ENCODE measurements at regions of chr15 and their contacts with region 1.

Region 1: GRCh38 chr15:52528991-52529926 is 579 bp upstream of the MYO5A start:
- DNase-seq: peak; percentile 76
- H3K4me3 Mint-ChIP-seq: peak overlapping the region; percentile 77
- H3K27ac Mint-ChIP-seq: peak overlapping the region; percentile 75
- H3K4me1 Mint-ChIP-seq: peaks cover 29% of the 10 kb centered on the region
- H3K27me3 Mint-ChIP-seq: peaks cover 16% of the 10 kb centered on the region

Region 2: GRCh38 chr15:52256366-52256765 is 272.9 kb before region 1 on chr15:
- intact Hi-C with region 1: loop called (anchors 1 kb)
- DNase-seq: peak; percentile 62
- H3K4me3 Mint-ChIP-seq: peak overlapping the region; percentile 47
- H3K27ac Mint-ChIP-seq: peak overlapping the region; percentile 82
- H3K4me1 Mint-ChIP-seq: peaks cover 28% of the 10 kb centered on the region
- H3K27me3 Mint-ChIP-seq: no peaks in the 10 kb centered on the region

Region 3: DNA sequence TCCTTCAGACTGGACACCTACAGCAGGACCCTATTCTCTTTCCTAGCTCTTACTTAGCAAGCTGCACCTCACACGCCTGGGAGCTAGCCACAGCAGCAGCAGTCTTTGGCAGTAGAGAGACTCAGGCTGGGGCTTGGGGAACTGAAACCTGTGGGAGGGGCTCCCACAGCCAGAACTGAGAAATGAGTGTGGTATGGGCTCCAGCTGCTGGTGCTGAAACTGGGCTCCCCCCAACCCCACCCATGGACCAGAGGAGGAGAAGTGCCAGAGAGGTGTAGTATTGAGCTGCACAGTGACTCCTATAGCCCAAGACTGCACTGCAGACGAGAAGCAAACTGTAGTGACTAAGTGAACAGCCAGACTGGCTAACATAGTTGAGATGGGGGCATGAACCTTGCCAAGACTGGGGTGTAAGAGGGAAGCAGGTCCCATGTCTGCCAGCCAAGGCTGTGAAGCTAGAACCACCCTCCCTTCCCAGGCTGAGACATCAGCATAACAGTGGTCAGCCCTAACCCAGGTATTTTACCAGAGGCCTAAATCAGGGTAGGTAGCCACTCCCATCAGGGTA is 63.0 kb before region 1 on chr15:
- intact Hi-C with region 1: loop called (anchors 1 kb)
- DNase-seq: peak; percentile 44
- H3K4me3 Mint-ChIP-seq: no peak overlapping the region
- H3K27ac Mint-ChIP-seq: no peak overlapping the region
- H3K4me1 Mint-ChIP-seq: peaks cover 52% of the 10 kb centered on the region
- H3K27me3 Mint-ChIP-seq: no peaks in the 10 kb centered on the region

Region 4: DNA sequence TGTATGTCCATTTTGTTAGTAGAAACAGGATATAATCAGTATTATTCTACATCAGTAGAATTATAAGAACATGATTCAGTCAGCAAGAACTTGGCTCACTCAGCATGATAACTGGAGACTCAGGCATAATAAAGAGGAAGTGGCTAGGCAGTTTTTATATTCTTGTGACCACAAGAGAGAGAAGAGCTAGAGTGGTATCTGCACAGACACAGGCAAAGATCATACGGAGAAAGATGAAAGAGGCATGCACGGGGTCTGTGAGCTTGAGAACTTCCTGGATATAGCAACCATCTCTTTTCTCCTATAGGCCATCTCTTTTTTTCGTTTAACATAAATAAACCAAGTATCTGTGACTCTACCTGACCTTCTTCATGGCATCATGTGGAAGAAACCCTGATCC is 47.3 kb before region 1 on chr15:
- intact Hi-C with region 1: loop called (anchors 5 kb)
- DNase-seq: peak; percentile 49
- H3K4me3 Mint-ChIP-seq: peak overlapping the region; percentile 49
- H3K27ac Mint-ChIP-seq: peak overlapping the region; percentile 81
- H3K4me1 Mint-ChIP-seq: peaks cover 63% of the 10 kb centered on the region
- H3K27me3 Mint-ChIP-seq: peaks cover 5% of the 10 kb centered on the region

Region 5: GRCh38 chr15:52568601-52569256 is 39.5 kb after region 1 on chr15 and contains the start of gene ARPP19:
- intact Hi-C with region 1: loop called (anchors 1 kb)
- DNase-seq: peak; percentile 75
- H3K4me3 Mint-ChIP-seq: peak within 1 kb of the TSS; percentile 92
- H3K27ac Mint-ChIP-seq: peak within 1 kb of the TSS; percentile 99
- H3K4me1 Mint-ChIP-seq: peaks cover 43% of the 10 kb centered on the region
- H3K27me3 Mint-ChIP-seq: peaks cover 2% of the 10 kb centered on the region
- total RNA-seq, gene ARPP19: 195 and 216 TPM in 2 replicates